ENCODE measurements at regions of chr21 and their contacts with region 1.

Region 1: DNA sequence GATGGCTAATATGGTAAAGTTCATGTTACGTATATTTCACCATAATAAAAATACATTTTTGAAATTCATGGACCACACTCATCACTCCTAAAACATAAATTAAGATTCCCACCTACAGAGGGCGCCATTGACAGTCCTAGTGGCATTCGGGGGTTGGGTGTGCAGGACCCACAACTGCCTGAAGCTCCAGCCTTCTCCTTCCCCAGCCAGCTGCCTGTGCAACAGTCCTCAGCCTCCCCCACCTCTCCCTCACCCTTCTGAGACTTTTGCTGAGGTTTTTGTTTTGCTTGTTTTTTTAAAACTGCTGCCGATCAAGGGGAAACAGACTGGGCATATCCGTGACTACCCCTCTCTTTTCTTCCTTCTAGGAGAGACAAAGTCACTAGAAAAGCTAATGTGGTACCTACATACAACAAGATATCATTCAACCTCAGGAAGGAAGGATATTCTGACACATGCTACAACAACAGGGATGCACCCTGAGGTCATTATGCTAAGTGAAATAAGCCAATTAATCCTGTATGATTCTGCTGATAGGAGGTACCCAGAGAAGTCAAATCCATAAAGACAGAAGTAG is 9.2 kb upstream of the EVA1C start:
- DNase-seq: peak; percentile 36 to 78
- ATAC-seq: peak; percentile 74 to 90 (median 86)
- H3K4me3 ChIP-seq: no peak overlapping the region
- H3K27ac ChIP-seq: no peak overlapping the region
- H3K4me1 ChIP-seq: peaks cover 0 to 31% (median 8%) of the 10 kb centered on the region in 9 donors
- H3K27me3 ChIP-seq: no peaks in the 10 kb centered on the region
- CTCF ChIP-seq: peak; percentile 66 to 86 (median 76)

Region 2: DNA sequence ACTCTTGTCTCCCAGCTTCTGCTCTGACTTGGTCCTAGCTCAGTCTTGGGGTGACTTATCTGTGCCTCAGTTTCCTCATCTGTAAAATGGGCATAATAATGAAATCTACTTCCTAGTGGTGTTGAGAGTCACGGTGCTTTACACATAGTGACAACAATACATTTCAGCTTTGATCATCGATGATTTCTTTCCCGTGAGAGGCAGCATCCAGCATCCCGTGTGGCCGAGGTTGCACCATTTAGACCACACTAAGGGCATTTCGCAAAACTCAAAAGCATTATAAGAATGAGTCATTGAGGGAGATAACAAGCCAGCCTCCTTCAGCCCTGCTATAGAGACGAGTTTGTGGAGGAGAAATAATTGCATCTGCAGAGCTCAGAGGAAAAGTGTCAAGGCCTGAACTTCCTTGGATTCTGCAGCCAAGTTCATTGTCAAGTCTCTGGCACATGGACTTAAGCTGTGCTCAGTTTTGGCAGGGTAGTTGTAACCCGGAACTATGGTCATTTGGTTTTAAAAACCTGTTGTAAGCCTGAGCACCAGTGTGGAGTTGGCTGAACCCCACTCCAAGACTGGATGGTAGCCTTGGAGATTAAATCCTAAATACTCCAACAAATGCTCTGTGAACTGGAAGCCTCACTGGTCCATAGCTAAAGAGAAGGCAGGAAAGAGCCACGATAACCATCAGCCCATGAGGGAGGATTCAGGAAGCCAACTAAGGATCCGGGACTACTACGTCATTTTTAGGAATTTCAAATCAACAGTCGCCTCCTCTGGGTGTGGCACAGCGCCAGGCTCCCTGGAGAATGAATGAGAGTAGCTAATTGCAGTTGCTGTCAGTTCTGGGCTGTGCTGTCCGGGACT is 117.8 kb after region 1 on chr21:
- intact Hi-C with region 1: loop called in 1 of 10 experiments (anchors 5 kb)
- DNase-seq: peak; percentile 91 to 96
- ATAC-seq: peak; percentile 65 to 81 (median 78)
- H3K4me3 ChIP-seq: peak overlapping the region in 2 of 10 donors; percentile 2 to 7
- H3K27ac ChIP-seq: peak overlapping the region; percentile 43 to 93 (median 88)
- H3K4me1 ChIP-seq: peaks cover 30 to 74% (median 66%) of the 10 kb centered on the region in 9 donors
- H3K27me3 ChIP-seq: no peaks in the 10 kb centered on the region
- CTCF ChIP-seq: no peak

Region 3: GRCh38 chr21:32562426-32562825 is 159.1 kb after region 1 on chr21:
- intact Hi-C with region 1: loop called in 2 of 10 experiments (anchors 2 kb)
- DNase-seq: peak in 1 of 2 donors; percentile 64
- ATAC-seq: peak in 7 of 8 donors; percentile 47 to 92 (median 82)
- H3K4me3 ChIP-seq: no peak overlapping the region
- H3K27ac ChIP-seq: peak overlapping the region in 8 of 10 donors; percentile 10 to 67 (median 57)
- H3K4me1 ChIP-seq: peaks cover 0 to 15% (median 6%) of the 10 kb centered on the region in 9 donors
- H3K27me3 ChIP-seq: no peaks in the 10 kb centered on the region
- CTCF ChIP-seq: peak; percentile 32 to 82 (median 58)

Region 4: GRCh38 chr21:32569261-32570230 is 166.3 kb after region 1 on chr21:
- intact Hi-C with region 1: loop called in 8 of 10 experiments (anchors 2 to 10 kb)
- DNase-seq: peak; percentile 64 to 82
- ATAC-seq: peak; percentile 90 to 96 (median 92)
- H3K4me3 ChIP-seq: peak overlapping the region; percentile 30 to 72 (median 62)
- H3K27ac ChIP-seq: peak overlapping the region in 9 of 10 donors; percentile 54 to 90 (median 83)
- H3K4me1 ChIP-seq: peaks cover 0 to 18% (median 9%) of the 10 kb centered on the region in 9 donors
- H3K27me3 ChIP-seq: no peaks in the 10 kb centered on the region
- CTCF ChIP-seq: peak; percentile 67 to 91 (median 84)

Region 5: DNA sequence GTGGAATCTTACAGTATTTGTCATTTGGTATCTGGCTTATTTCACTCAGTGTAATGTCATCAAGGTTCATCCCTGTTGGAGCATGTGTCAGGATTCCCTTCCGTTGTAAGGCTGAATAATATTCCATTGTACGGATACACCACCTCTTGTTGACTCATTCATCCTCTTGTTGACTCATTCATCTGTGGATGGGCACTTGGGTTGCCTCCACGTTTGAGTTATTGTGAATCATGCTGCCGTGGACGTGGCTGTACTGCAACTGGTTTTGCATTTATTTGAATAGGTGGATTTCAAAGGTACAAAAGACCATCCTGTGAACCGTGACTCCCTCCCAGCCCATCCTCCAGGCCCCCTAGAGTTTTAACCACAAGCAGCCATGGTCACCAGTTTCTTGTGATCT is 193.9 kb after region 1 on chr21:
- intact Hi-C with region 1: loop called in 8 of 10 experiments (anchors 1 to 10 kb)
- DNase-seq: no peak
- ATAC-seq: no peak
- H3K4me3 ChIP-seq: no peak overlapping the region
- H3K27ac ChIP-seq: no peak overlapping the region
- H3K4me1 ChIP-seq: peaks cover 0 to 4% (median 0%) of the 10 kb centered on the region in 9 donors
- H3K27me3 ChIP-seq: no peaks in the 10 kb centered on the region
- CTCF ChIP-seq: no peak

Region 6: DNA sequence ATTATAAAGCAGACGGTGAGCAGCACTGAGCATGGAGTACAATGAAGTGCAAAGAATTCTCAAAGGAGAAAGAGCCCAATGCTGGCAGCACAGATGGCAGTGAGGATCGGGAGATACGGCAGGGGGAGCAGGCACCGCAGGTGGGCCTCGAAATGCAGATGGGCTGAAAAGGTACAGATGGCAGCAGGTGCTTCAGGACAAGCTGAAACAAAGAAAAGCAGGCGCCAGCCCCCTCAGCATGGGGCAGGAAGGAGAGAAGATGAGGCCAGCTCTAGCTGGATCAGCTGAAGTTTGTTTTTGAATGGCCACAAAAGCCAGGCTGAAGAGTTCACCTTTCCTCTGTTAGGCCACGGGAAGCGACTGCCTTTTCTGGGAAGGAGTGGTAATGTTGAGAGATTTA is 201.2 kb after region 1 on chr21:
- intact Hi-C with region 1: loop called in 8 of 10 experiments (anchors 1 to 10 kb)
- DNase-seq: no peak
- ATAC-seq: no peak
- H3K4me3 ChIP-seq: no peak overlapping the region
- H3K27ac ChIP-seq: no peak overlapping the region
- H3K4me1 ChIP-seq: peaks cover 0 to 4% (median 0%) of the 10 kb centered on the region in 9 donors
- H3K27me3 ChIP-seq: no peaks in the 10 kb centered on the region
- CTCF ChIP-seq: no peak